ENCODE measurements at regions of chrX and their contacts with region 1.

Region 1: GRCh38 chrX:129717892-129718291 is 20.9 kb upstream of the XPNPEP2 start:
- DNase-seq: peak in 1 of 2 donors; percentile 64
- ATAC-seq: peak; percentile 81 to 93 (median 90)
- H3K4me3 ChIP-seq: no peak overlapping the region
- H3K27ac ChIP-seq: peak overlapping the region; percentile 68
- H3K4me1 ChIP-seq: peaks cover 6% of the 10 kb centered on the region
- H3K27me3 ChIP-seq: no peaks in the 10 kb centered on the region
- CTCF ChIP-seq: no peak

Region 2: GRCh38 chrX:129318375-129318774 is 399.5 kb before region 1 on chrX:
- intact Hi-C with region 1: no loop called
- DNase-seq: no peak
- ATAC-seq: no peak
- H3K4me3 ChIP-seq: no peak overlapping the region
- H3K27ac ChIP-seq: no peak overlapping the region
- H3K4me1 ChIP-seq: no peaks in the 10 kb centered on the region
- H3K27me3 ChIP-seq: no peaks in the 10 kb centered on the region
- CTCF ChIP-seq: peak; percentile 10

Region 3: GRCh38 chrX:129654419-129655165 is 63.3 kb before region 1 on chrX and contains the start of gene APLN:
- intact Hi-C with region 1: loop called in 1 of 2 experiments (anchors 5 kb)
- DNase-seq: peak; percentile 68 to 69
- ATAC-seq: peak; percentile 46 to 70 (median 60)
- H3K4me3 ChIP-seq: peak within 1 kb of the TSS; percentile 63
- H3K27ac ChIP-seq: no peak within 1 kb of the TSS
- H3K4me1 ChIP-seq: no peaks in the 10 kb centered on the region
- H3K27me3 ChIP-seq: no peaks in the 10 kb centered on the region
- CTCF ChIP-seq: no peak
- total RNA-seq, gene APLN: 0.86 to 4.1 (median 1.6) TPM

Region 4: DNA sequence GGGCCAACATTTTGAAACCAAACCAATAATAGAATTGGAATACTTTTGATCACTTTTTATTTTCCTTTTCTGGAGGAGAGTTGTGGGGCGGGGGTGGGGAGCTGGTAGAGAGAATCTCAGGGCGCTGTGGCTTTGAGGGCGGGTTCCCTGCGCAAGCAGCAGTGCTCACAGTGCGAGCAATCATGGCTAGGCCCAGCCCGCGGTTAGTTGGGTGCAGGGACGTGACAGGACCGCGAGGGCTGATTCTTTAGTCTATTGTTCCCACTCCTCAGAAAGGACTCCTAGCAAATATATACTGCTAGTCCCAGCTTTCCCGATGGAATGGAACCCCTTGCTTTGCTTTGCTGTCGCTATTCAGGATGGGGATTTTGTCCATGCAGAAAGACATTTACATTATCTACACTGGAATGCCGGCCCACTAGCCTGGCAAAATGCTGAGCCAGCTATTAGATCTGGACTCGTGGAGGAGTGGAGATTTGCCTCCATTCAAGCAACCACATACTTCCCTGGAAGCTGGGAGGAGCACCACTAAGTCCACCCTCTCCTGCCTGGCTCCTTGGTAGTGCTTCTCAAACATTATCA is 39.2 kb before region 1 on chrX:
- intact Hi-C with region 1: loop called (anchors 5 kb)
- DNase-seq: no peak
- ATAC-seq: no peak
- H3K4me3 ChIP-seq: peak overlapping the region; percentile 58
- H3K27ac ChIP-seq: peak overlapping the region; percentile 87
- H3K4me1 ChIP-seq: peaks cover 3% of the 10 kb centered on the region
- H3K27me3 ChIP-seq: no peaks in the 10 kb centered on the region
- CTCF ChIP-seq: no peak

Region 5: GRCh38 chrX:129748305-129748704 is 30.4 kb after region 1 on chrX:
- intact Hi-C with region 1: no loop called
- DNase-seq: peak in 1 of 2 donors; percentile 39
- ATAC-seq: peak in 3 of 4 donors; percentile 56 to 70 (median 58)
- H3K4me3 ChIP-seq: no peak overlapping the region
- H3K27ac ChIP-seq: no peak overlapping the region
- H3K4me1 ChIP-seq: no peaks in the 10 kb centered on the region
- H3K27me3 ChIP-seq: peaks cover 0 to 9% (median 0%) of the 10 kb centered on the region in 3 donors
- CTCF ChIP-seq: no peak

Measured in psoas muscle (tissue), 8 donors.